ENCODE measurements at regions of chr3 and their contacts with region 1.

Region 1: DNA sequence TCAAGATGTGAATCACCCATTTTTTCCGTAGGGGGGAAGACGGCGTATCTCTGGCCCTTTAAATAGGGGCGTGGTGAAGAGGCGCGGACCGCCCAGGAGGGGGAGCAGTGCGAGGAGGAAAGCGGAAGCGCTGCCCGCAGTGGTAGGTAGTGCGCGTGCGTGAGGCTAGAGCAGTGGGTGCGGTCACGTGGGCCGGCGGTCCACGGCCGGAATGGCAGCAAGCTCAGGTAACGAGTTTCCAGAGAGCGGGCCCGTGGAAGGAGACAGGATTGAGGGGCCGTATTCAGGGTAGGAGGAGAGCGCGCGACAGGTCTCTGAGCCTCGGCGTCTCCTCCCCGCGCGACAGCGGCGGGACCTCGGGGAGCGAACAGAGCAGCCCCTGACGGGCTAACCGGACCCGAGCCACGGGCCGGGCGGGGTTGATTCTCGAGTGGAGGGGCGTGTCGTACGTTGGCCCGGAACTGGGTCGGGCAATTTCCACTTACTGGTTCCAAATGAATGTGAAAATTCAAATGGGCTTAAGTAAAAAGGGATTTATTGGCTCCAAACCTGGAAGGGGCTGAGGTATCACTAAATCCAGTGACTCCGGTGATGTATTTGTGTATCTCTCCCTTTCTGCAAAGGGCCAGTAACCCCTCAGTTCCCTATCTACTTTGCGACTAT is at the start of gene VPS8:
- DNase-seq: peak; percentile 92 to 97 (median 96)
- ATAC-seq: peak; percentile 97
- H3K4me3 ChIP-seq: peak within 1 kb of the TSS; percentile 94
- H3K4me3 Mint-ChIP-seq: peak within 1 kb of the TSS; percentile 87 to 99 (median 96)
- H3K27ac ChIP-seq: peak within 1 kb of the TSS; percentile 88
- H3K27ac Mint-ChIP-seq: peak within 1 kb of the TSS; percentile 93 to 98 (median 97)
- H3K4me1 ChIP-seq: peaks cover 15 to 44% of the 10 kb centered on the region in 2 donors
- H3K4me1 Mint-ChIP-seq: peaks cover 27 to 59% (median 57%) of the 10 kb centered on the region in 7 donors
- H3K27me3 ChIP-seq: no peaks in the 10 kb centered on the region
- H3K27me3 Mint-ChIP-seq: peaks cover 0 to 4% (median 0%) of the 10 kb centered on the region in 5 donors
- total RNA-seq, gene VPS8: 77.9 to 119 (median 106) TPM

Region 2: DNA sequence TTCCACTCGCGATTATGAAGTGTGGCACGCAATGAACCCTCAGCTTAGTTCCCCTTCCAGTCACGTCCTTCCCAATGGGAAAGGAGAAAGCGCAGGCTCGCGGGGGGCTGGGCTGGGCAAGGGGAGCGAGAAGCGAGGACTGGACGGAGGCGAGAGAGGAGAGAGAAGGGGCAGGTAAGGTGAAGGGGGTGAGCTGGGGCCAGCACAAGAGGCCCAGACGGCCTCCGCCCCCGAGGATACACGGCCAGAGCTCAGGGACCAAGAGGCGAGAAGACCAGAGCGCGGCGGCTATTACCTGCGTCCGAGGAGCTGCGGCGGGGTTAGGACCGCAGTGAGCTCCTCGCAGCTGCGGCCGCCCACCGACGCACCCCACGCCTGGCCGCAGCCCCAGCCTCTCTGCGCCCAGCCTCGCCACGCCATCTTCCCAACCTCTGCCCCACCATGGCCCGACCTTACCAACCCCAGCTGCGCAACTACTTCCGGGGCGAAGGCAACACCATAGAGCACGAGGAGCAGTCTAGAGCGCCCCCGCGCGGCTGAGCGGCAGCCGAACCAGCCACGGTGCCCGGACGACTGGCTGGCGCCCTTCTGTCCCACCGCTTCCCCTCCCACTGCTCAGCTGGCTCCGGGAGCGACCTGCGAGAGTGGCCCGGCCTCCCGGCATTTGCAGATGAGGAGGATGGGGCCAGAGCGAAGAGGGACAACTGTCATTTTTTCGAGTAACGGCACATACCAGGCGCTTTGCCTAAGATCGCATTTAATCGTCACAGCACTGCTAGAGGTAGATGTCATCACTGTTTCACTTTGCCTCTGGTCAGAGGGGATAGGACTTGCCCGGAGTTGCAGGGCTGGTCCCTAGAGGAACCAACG is 927.5 kb before region 1 on chr3 and contains the start of gene PARL:
- CTCF ChIA-PET with region 1: no interaction called
- POLR2A ChIA-PET with region 1: no interaction called
- intact Hi-C with region 1: loop called (anchors 2 to 10 kb)
- DNase-seq: peak; percentile 88 to 99 (median 95)
- ATAC-seq: peak; percentile 100
- H3K4me3 ChIP-seq: peak within 1 kb of the TSS; percentile 85
- H3K4me3 Mint-ChIP-seq: peak within 1 kb of the TSS; percentile 89 to 98 (median 96)
- H3K27ac ChIP-seq: peak within 1 kb of the TSS; percentile 77
- H3K27ac Mint-ChIP-seq: peak within 1 kb of the TSS; percentile 86 to 96 (median 93)
- H3K4me1 ChIP-seq: peaks cover 15% of the 10 kb centered on the region in 2 donors
- H3K4me1 Mint-ChIP-seq: peaks cover 15 to 53% (median 41%) of the 10 kb centered on the region in 7 donors
- H3K27me3 ChIP-seq: no peaks in the 10 kb centered on the region
- H3K27me3 Mint-ChIP-seq: peaks cover 0 to 3% (median 0%) of the 10 kb centered on the region in 5 donors
- total RNA-seq, gene PARL: 41.6 to 50.4 (median 47.1) TPM

Region 3: DNA sequence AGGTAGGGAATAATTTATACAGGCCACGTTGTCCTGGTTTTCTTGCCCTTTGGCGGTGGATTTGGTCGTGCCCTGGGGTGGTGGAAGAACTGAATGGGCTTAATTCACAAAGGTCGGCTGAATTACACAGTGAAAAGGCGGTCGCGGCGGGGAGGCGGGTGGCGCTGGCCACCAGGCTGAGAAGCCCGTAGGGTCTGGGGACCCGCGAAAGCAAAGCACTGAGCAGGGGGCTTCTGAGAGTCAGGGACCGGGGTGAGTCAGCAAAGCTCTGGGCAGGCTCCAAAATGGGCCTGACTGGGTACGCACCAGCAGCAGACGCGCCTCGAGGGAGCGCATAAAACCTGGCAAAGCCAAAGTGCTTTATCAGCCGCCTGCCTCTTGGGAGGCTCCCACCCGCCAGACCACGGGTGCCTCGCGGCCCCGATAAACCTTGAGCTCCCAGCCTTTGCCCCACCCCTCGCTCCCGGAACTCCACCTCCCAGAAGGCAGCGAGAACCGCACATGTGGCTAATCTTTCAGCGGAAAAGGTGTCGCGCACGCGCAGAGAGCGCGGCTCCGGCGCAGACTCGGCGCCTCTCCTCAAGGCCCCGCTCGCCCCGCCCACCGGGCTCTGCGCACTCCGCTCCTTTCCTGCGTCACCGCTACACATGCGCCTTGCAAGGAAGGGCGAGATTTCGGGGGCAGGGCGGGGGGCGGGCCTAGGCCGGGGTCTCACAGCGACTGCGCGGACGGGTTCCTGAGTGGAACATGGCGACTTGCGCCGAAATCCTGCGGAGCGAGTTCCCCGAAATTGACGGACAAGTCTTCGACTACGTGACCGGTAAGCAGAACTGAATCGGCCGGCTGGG is 626.4 kb before region 1 on chr3 and contains the start of gene ABCF3:
- CTCF ChIA-PET with region 1: no interaction called
- POLR2A ChIA-PET with region 1: no interaction called
- intact Hi-C with region 1: loop called in 1 of 2 experiments (anchors 5 kb)
- DNase-seq: peak; percentile 98 to 100 (median 99)
- ATAC-seq: peak; percentile 96
- H3K4me3 ChIP-seq: peak within 1 kb of the TSS; percentile 81
- H3K4me3 Mint-ChIP-seq: peak within 1 kb of the TSS; percentile 91 to 100 (median 98)
- H3K27ac ChIP-seq: peak within 1 kb of the TSS; percentile 89
- H3K27ac Mint-ChIP-seq: peak within 1 kb of the TSS; percentile 89 to 98 (median 97)
- H3K4me1 ChIP-seq: peaks cover 18 to 24% of the 10 kb centered on the region in 2 donors
- H3K4me1 Mint-ChIP-seq: peaks cover 31 to 52% (median 43%) of the 10 kb centered on the region in 7 donors
- H3K27me3 ChIP-seq: no peaks in the 10 kb centered on the region
- H3K27me3 Mint-ChIP-seq: no peaks in the 10 kb centered on the region
- total RNA-seq, gene ABCF3: 79.3 to 153 (median 117) TPM

Region 4: DNA sequence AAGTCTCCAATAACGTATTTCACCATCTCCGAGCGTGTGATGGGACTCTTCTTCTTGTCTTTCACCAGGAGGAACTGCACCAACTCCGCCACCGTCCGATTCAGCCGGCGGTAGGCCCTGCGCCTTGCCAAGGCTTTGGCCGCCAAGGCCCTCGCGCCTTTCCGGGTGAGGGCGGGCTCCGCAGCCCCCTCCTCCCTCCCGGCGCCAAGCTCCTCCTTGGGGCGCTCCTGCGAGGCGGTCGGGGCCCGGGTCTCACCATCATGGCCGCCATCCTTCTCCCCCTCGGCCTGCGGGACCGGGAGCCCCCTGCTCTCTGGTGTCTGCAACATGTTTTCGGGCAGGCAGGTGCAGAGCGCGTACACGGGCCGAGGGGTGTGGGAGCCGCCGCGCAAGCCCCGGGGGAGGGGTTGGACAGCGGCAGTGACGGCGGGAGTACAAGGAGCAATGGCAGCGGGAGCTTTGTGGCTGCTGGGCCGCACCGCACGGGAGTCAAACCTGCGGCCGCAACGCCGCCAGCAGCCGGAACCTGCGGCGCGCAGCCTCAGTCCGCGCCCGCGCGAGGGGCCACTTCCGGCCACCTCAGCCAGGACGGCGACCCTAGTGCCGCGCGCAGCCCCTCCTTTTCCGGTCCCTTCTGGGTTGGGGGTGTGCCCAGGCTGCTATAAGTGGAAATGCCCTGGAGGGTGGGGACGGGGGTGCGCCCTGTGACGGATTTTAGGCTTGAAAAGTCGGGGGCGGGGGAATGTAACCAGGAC is 100.5 kb before region 1 on chr3 and contains the start of gene MAGEF1:
- CTCF ChIA-PET with region 1: no interaction called
- POLR2A ChIA-PET with region 1: interaction called, 3 read pairs
- intact Hi-C with region 1: loop called (anchors 1 kb)
- DNase-seq: peak; percentile 34 to 78 (median 69)
- ATAC-seq: peak; percentile 87
- H3K4me3 ChIP-seq: peak within 1 kb of the TSS; percentile 70
- H3K4me3 Mint-ChIP-seq: peak within 1 kb of the TSS; percentile 81 to 99 (median 93)
- H3K27ac ChIP-seq: peak within 1 kb of the TSS; percentile 77
- H3K27ac Mint-ChIP-seq: peak within 1 kb of the TSS; percentile 69 to 99 (median 87)
- H3K4me1 ChIP-seq: peaks cover 10 to 17% of the 10 kb centered on the region in 2 donors
- H3K4me1 Mint-ChIP-seq: peaks cover 28 to 44% (median 34%) of the 10 kb centered on the region in 7 donors
- H3K27me3 ChIP-seq: no peaks in the 10 kb centered on the region
- H3K27me3 Mint-ChIP-seq: peaks cover 0 to 20% (median 0%) of the 10 kb centered on the region in 5 donors
- total RNA-seq, gene MAGEF1: 9.0 to 17.4 (median 13.3) TPM

Region 5: DNA sequence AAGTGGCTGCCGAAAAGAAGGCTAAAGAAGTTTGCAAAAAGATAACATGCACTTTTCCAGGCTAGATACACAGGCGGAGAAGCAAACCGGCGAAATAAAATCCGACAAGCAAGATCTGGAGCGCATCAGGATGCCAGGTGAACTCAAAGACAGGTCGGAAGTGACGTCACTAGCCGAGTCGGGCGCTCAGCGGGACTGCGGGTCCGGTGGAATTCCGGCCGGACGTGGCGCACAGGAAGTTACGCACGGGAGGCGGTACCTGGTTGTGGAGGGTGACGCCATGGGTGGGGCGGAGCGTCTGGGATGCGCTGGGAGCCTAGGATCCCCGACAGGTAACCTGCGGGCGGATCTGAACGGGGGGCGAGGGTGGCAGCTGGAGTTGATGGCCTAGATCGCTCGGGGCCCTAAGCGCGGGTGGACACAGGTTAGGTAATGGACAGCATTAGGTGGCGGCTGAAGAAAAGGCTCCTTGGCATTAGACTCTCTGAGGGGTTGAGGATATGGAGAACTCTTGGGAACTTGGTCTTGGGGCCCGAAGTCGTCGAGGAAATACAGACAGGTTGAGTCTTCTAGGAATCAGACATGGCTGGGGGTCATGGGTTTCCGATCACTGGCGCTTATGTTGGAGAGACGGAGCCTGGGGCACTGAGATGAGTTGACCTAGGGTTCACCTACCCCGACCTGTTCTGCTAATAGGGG is 470.7 kb after region 1 on chr3:
- CTCF ChIA-PET with region 1: no interaction called
- POLR2A ChIA-PET with region 1: no interaction called
- intact Hi-C with region 1: loop called (anchors 2 to 10 kb)
- DNase-seq: peak; percentile 80 to 95 (median 89)
- ATAC-seq: peak; percentile 99
- H3K4me3 ChIP-seq: peak overlapping the region; percentile 91
- H3K4me3 Mint-ChIP-seq: peak overlapping the region; percentile 89 to 100 (median 94)
- H3K27ac ChIP-seq: peak overlapping the region; percentile 59
- H3K27ac Mint-ChIP-seq: peak overlapping the region; percentile 77 to 98 (median 93)
- H3K4me1 ChIP-seq: peaks cover 5 to 12% of the 10 kb centered on the region in 2 donors
- H3K4me1 Mint-ChIP-seq: peaks cover 15 to 33% (median 19%) of the 10 kb centered on the region in 7 donors
- H3K27me3 ChIP-seq: no peaks in the 10 kb centered on the region
- H3K27me3 Mint-ChIP-seq: peaks cover 9 to 25% (median 21%) of the 10 kb centered on the region in 5 donors

Region 6: GRCh38 chr3:186570096-186570940 is 1758.2 kb after region 1 on chr3 and contains the start of gene DNAJB11:
- CTCF ChIA-PET with region 1: no interaction called
- POLR2A ChIA-PET with region 1: no interaction called
- intact Hi-C with region 1: loop called (anchors 10 kb)
- DNase-seq: peak; percentile 83 to 100 (median 99)
- ATAC-seq: peak; percentile 91
- H3K4me3 ChIP-seq: peak within 1 kb of the TSS; percentile 85
- H3K4me3 Mint-ChIP-seq: peak within 1 kb of the TSS; percentile 83 to 98 (median 95)
- H3K27ac ChIP-seq: peak within 1 kb of the TSS; percentile 95
- H3K27ac Mint-ChIP-seq: peak within 1 kb of the TSS; percentile 85 to 99 (median 98)
- H3K4me1 ChIP-seq: peaks cover 25 to 33% of the 10 kb centered on the region in 2 donors
- H3K4me1 Mint-ChIP-seq: peaks cover 20 to 70% (median 66%) of the 10 kb centered on the region in 7 donors
- H3K27me3 ChIP-seq: no peaks in the 10 kb centered on the region
- H3K27me3 Mint-ChIP-seq: peaks cover 0 to 4% (median 0%) of the 10 kb centered on the region in 5 donors
- total RNA-seq, gene DNAJB11: 29.9 to 75.2 (median 63.1) TPM

Measured in naive thymus-derived CD4-positive, alpha-beta T cell (primary cell).